Activated naive CD4-positive, alpha-beta T cell treated with anti-CD3 and anti-CD28 coated beads for 36 hours (primary cell): ENCODE measurements at regions of chr1 and their contacts with region 1.

Region 1: GRCh38 chr1:230270559-230271281 is 155.4 kb downstream of the PGBD5 start:
- DNase-seq: peak; percentile 59
- H3K4me3 Mint-ChIP-seq: no peak overlapping the region
- H3K27ac Mint-ChIP-seq: peak overlapping the region; percentile 75
- H3K4me1 Mint-ChIP-seq: peaks cover 57% of the 10 kb centered on the region
- H3K27me3 Mint-ChIP-seq: no peaks in the 10 kb centered on the region

Region 2: GRCh38 chr1:229848752-229849677 is 421.7 kb before region 1 on chr1:
- CTCF ChIA-PET with region 1: no interaction called
- intact Hi-C with region 1: no loop called
- DNase-seq: peak; percentile 21
- H3K4me3 Mint-ChIP-seq: no peak overlapping the region
- H3K27ac Mint-ChIP-seq: no peak overlapping the region
- H3K4me1 Mint-ChIP-seq: no peaks in the 10 kb centered on the region
- H3K27me3 Mint-ChIP-seq: peaks cover 3% of the 10 kb centered on the region

Region 3: GRCh38 chr1:230240446-230241086 is 30.2 kb before region 1 on chr1:
- CTCF ChIA-PET with region 1: no interaction called
- intact Hi-C with region 1: loop called (anchors 2 kb)
- DNase-seq: no peak
- H3K4me3 Mint-ChIP-seq: no peak overlapping the region
- H3K27ac Mint-ChIP-seq: peak overlapping the region; percentile 84
- H3K4me1 Mint-ChIP-seq: peaks cover 20% of the 10 kb centered on the region
- H3K27me3 Mint-ChIP-seq: no peaks in the 10 kb centered on the region